ENCODE measurements at regions of chr17 and their contacts with region 1.

Region 1: DNA sequence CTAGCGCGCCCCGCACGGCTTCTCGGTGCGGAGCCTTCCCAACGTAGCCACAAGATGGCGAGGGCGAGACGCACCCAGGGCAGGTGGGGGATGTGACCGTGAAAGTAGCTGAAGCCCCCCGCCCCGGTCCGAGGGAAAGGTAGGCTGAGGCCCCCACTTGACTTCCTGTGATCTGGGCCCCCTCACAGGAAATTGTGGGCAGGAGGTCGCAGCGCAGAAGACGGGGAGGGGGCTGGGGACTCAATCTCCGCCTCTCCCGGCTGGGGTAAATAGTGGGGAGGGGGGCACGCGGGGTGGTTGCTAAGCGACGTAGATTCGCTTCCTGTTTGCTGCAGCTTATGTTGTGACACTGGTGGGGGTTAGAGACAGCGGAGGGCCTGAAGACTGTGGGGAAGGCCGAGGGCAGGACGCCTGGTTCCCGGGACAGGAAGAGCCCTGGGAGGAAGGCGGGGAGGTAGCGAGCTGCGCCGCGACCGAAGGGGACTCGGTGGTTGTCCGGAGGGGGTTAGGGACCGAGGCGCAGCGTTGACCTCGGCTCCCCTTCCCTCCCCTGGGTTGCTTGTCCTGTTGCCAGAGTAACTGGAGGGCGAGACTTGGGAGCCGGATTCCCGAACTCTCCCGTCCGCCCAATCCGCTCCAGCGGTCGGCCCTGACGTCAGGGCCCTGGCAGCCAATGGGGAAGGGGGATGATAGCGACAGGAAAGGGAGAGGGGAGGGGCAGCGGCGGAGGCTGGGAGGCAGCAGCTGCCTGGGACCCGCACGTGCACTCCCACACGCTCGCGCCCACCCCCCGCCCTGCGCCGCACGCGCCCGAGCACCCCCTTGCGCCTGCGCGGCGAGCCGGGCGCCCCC is 1.2 kb downstream of the KDM6B start:
- ATAC-seq: peak; percentile 40 to 74 (median 66)
- H3K4me3 ChIP-seq: peak overlapping the region; percentile 42 to 66 (median 54)
- H3K27ac ChIP-seq: peak overlapping the region; percentile 67 to 68
- H3K4me1 ChIP-seq: peaks cover 19 to 25% of the 10 kb centered on the region in 2 donors

Region 2: GRCh38 chr17:7716901-7717755 is 118.1 kb before region 1 on chr17 and contains the start of gene DNAH2:
- in situ Hi-C with region 1: loop called in 1 of 9 experiments (anchors 25 kb)
- ATAC-seq: peak; percentile 76 to 92 (median 82)
- H3K4me3 ChIP-seq: peak within 1 kb of the TSS; percentile 48 to 65 (median 51)
- H3K27ac ChIP-seq: peak within 1 kb of the TSS; percentile 73 to 83
- H3K4me1 ChIP-seq: peaks cover 39 to 56% of the 10 kb centered on the region in 2 donors
- total RNA-seq, gene DNAH2: 0.25 to 4.4 (median 0.65) TPM

Region 3: GRCh38 chr17:7931709-7932482 is 96.7 kb after region 1 on chr17 and contains the starts of genes CNTROB and TRAPPC1:
- in situ Hi-C with region 1: no loop called
- ATAC-seq: peak; percentile 88 to 97 (median 94)
- H3K4me3 ChIP-seq: peak within 1 kb of the TSS; percentile 59 to 96 (median 63)
- H3K27ac ChIP-seq: peak within 1 kb of the TSS; percentile 56 to 68
- H3K4me1 ChIP-seq: peaks cover 27% of the 10 kb centered on the region in 2 donors
- total RNA-seq, gene CNTROB: 19.3 to 40.7 (median 31.7) TPM
- total RNA-seq, gene TRAPPC1: 60.1 to 94.1 (median 71.4) TPM

Measured in motor neuron (in vitro differentiated cells).